PC-3 (cell line): ENCODE measurements at regions of chr11 and their contacts with region 1.

Region 1: GRCh38 chr11:128412847-128413791 is 174.2 kb downstream of the ETS1 start:
- DNase-seq: peak; percentile 91
- ATAC-seq: peak; percentile 80
- H3K4me3 ChIP-seq: no peak overlapping the region
- H3K27ac ChIP-seq: peak overlapping the region; percentile 5
- H3K4me1 ChIP-seq: peaks cover 56% of the 10 kb centered on the region
- H3K27me3 ChIP-seq: no peaks in the 10 kb centered on the region
- CTCF ChIP-seq: no peak

Region 2: DNA sequence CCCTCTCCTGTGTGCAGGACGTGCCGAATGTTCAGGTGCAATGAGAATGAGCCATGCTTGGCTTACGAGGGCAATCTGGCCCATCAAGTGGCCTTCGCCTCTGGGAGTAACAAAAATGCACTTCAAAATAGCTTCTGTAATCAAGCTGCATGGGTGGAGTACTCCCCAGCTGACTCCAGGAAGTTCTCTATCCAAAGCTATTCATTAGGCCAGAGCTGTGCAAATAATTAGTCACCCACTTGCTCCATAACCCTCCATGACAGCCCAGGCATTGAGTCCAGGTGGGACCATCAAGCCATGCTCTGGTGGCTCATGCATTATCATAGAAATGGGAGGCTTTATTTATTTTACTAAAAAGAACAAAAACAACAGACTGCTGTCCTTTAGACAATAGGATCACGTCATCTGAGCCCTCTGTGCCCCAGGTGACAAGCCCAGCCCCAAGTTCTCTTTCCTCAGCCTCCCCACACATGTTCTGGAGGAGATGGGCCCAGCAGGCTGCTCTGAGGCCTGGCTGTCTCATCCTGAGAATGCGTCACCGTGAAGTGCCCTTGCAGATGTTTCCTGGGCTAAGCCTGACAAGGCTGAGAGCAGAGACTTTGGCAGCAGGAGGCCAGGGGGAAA is 70.5 kb before region 1 on chr11:
- CTCF ChIA-PET with region 1: no interaction called
- POLR2A ChIA-PET with region 1: no interaction called
- intact Hi-C with region 1: loop called (anchors 2 kb)
- DNase-seq: peak; percentile 96
- ATAC-seq: peak; percentile 91
- H3K4me3 ChIP-seq: no peak overlapping the region
- H3K27ac ChIP-seq: peak overlapping the region; percentile 95
- H3K4me1 ChIP-seq: peaks cover 59% of the 10 kb centered on the region
- H3K27me3 ChIP-seq: no peaks in the 10 kb centered on the region
- CTCF ChIP-seq: no peak

Region 3: DNA sequence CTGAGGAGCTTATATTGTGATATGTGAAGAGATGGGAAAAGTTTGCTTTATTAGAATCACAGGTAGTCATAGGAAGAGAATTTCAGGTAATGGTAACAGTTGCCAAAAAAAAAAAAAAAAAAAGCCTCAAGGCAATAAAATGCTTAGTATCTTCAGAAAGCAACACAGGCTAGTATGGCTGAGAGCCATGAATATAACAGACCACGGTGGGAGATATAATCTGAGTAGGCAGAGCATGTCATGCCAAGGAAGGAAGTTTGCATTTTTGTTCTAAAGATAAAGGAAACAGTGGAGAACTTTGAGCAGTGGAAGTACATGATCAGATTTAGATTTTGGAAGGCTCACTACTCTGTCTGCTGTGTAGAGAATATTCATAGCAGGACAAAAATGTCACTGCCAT is 37.2 kb before region 1 on chr11:
- CTCF ChIA-PET with region 1: no interaction called
- POLR2A ChIA-PET with region 1: no interaction called
- intact Hi-C with region 1: loop called (anchors 5 kb)
- DNase-seq: peak; percentile 92
- ATAC-seq: peak; percentile 49
- H3K4me3 ChIP-seq: no peak overlapping the region
- H3K27ac ChIP-seq: peak overlapping the region; percentile 11
- H3K4me1 ChIP-seq: peaks cover 25% of the 10 kb centered on the region
- H3K27me3 ChIP-seq: no peaks in the 10 kb centered on the region
- CTCF ChIP-seq: no peak

Region 4: GRCh38 chr11:128453444-128454336 is 40.6 kb after region 1 on chr11:
- CTCF ChIA-PET with region 1: no interaction called
- POLR2A ChIA-PET with region 1: no interaction called
- intact Hi-C with region 1: no loop called
- DNase-seq: peak; percentile 88
- ATAC-seq: peak; percentile 48
- H3K4me3 ChIP-seq: no peak overlapping the region
- H3K27ac ChIP-seq: peak overlapping the region; percentile 64
- H3K4me1 ChIP-seq: peaks cover 38% of the 10 kb centered on the region
- H3K27me3 ChIP-seq: no peaks in the 10 kb centered on the region
- CTCF ChIP-seq: no peak

Region 5: GRCh38 chr11:128548655-128549255 is 135.6 kb after region 1 on chr11:
- CTCF ChIA-PET with region 1: no interaction called
- POLR2A ChIA-PET with region 1: no interaction called
- intact Hi-C with region 1: no loop called
- DNase-seq: peak; percentile 31
- ATAC-seq: peak; percentile 91
- H3K4me3 ChIP-seq: peak overlapping the region; percentile 59
- H3K27ac ChIP-seq: no peak overlapping the region
- H3K4me1 ChIP-seq: no peaks in the 10 kb centered on the region
- H3K27me3 ChIP-seq: no peaks in the 10 kb centered on the region
- CTCF ChIP-seq: no peak